ENCODE measurements at regions of chr7 and their contacts with region 1.

Region 1: DNA sequence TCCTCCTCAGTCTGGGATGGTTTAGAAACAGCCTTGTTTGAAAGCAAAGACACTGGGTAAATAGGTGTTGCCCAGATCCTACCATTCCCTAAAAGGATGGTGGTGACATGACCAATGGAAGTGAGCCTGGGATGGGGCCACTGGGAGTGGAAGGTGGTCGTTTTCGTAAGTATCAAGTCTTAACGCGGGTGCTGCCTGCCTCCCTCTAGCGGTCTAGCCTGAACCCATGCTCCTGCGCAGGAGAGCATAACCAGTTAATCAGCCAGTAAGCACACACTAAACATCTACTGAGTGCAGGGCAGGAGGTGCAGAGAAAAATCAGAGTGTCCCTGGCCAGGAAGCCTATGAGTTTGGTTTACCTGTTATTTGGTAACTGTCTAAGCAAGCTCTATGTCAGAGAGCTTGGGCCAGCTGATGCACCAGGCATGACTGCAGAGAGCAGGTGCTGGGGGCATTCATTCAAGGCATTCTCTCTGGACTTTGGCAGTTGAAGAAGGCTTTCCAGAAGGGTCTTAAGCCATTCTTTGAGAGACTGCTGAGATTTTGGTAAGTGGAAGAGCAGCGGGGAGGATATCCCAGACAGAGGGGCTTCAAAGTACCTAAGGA is 923 bp downstream of the GARIN1A start:
- DNase-seq: peak in 1 of 2 experiments; percentile 49
- H3K4me3 ChIP-seq: no peak overlapping the region
- H3K4me3 Mint-ChIP-seq: no peak overlapping the region
- H3K27ac Mint-ChIP-seq: no peak overlapping the region
- H3K4me1 ChIP-seq: no peaks in the 10 kb centered on the region
- H3K4me1 Mint-ChIP-seq: no peaks in the 10 kb centered on the region
- H3K27me3 ChIP-seq: no peaks in the 10 kb centered on the region
- H3K27me3 Mint-ChIP-seq: peaks cover 2% of the 10 kb centered on the region
- CTCF ChIP-seq: peak; percentile 58 to 77

Region 2: GRCh38 chr7:128550920-128551319 is 122.1 kb before region 1 on chr7:
- CTCF ChIA-PET with region 1: no interaction called
- POLR2A ChIA-PET with region 1: no interaction called
- intact Hi-C with region 1: no loop called
- DNase-seq: no peak
- H3K4me3 ChIP-seq: no peak overlapping the region
- H3K4me3 Mint-ChIP-seq: no peak overlapping the region
- H3K27ac Mint-ChIP-seq: no peak overlapping the region
- H3K4me1 ChIP-seq: no peaks in the 10 kb centered on the region
- H3K4me1 Mint-ChIP-seq: no peaks in the 10 kb centered on the region
- H3K27me3 ChIP-seq: no peaks in the 10 kb centered on the region
- H3K27me3 Mint-ChIP-seq: no peaks in the 10 kb centered on the region
- CTCF ChIP-seq: no peak

Region 3: DNA sequence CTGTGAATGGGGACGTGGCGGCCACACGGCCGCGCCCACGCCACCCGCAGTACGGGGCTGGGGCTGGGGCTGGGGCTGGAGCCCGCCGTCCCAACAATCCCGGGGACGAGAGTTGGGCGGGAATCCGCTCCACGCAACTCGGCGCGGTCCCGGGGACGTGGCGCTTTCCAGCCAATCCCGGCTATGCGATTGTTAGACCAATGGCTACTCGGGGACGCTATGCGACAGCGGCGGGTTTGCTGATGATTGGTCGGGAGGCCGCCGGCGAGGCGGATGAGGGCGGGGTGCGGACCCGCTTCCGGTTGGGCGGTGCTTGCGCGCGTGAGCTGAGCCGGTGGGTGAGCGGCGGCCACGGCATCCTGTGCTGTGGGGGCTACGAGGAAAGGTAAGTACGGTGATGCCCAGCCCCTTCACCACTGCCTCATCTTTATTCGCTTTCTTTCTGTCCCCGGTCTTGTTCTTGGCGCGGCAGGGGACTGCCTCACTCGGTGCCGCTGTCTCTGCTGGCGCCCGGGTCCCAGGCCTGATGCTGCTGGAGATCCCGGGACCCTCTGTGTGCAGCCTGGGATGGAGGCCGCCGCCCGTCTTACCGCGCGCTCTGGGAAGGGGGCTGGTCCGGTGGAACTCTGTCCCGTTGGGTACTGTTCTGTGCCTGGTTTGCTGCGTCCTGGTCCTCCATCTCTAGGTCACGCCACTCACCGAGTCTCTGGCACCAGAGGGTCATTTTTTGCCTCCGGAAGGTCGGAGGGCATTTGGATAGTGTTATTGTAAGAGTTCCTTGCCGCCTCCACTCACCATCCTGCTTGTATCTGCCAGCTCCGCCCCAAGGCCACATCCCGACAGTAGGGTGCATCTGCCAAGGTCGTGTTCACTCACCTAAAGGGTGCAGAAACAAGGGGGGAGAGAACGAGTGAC is 66.3 kb after region 1 on chr7 and contains the start of gene CALU:
- CTCF ChIA-PET with region 1: no interaction called
- POLR2A ChIA-PET with region 1: no interaction called
- intact Hi-C with region 1: loop called (anchors 2 kb)
- DNase-seq: peak; percentile 97 to 98
- H3K4me3 ChIP-seq: peak within 1 kb of the TSS; percentile 53
- H3K4me3 Mint-ChIP-seq: peak within 1 kb of the TSS; percentile 96
- H3K27ac Mint-ChIP-seq: peak within 1 kb of the TSS; percentile 95
- H3K4me1 ChIP-seq: peaks cover 40% of the 10 kb centered on the region
- H3K4me1 Mint-ChIP-seq: peaks cover 23% of the 10 kb centered on the region
- H3K27me3 ChIP-seq: no peaks in the 10 kb centered on the region
- H3K27me3 Mint-ChIP-seq: no peaks in the 10 kb centered on the region
- CTCF ChIP-seq: no peak
- total RNA-seq, gene CALU: 171 and 184 TPM in 2 replicates

Measured in Caco-2 (cell line).